Sigmoid colon (tissue), 7 donors: ENCODE measurements at regions of chr6 and their contacts with region 1.

Region 1: GRCh38 chr6:38012573-38012972 is 193.0 kb downstream of the ZFAND3 start:
- DNase-seq: no peak
- H3K4me3 ChIP-seq: no peak overlapping the region
- H3K27ac ChIP-seq: no peak overlapping the region
- H3K4me1 ChIP-seq: peaks cover 0 to 42% (median 27%) of the 10 kb centered on the region in 4 donors
- H3K27me3 ChIP-seq: no peaks in the 10 kb centered on the region
- CTCF ChIP-seq: peak in 3 of 4 experiments; percentile 34 to 52 (median 43)
- EP300 ChIP-seq: no peak
- POLR2A ChIP-seq: no peak

Region 2: GRCh38 chr6:37783856-37784584 is 228.6 kb before region 1 on chr6:
- intact Hi-C with region 1: loop called (anchors 10 kb)
- DNase-seq: peak; percentile 73
- H3K4me3 ChIP-seq: peak overlapping the region; percentile 24 to 53 (median 48)
- H3K27ac ChIP-seq: peak overlapping the region; percentile 9 to 60 (median 34)
- H3K4me1 ChIP-seq: peaks cover 0 to 18% (median 15%) of the 10 kb centered on the region in 4 donors
- H3K27me3 ChIP-seq: no peaks in the 10 kb centered on the region
- CTCF ChIP-seq: no peak
- EP300 ChIP-seq: no peak
- POLR2A ChIP-seq: no peak

Region 3: GRCh38 chr6:37940074-37940847 is 72.3 kb before region 1 on chr6:
- intact Hi-C with region 1: no loop called
- DNase-seq: peak; percentile 67
- H3K4me3 ChIP-seq: no peak overlapping the region
- H3K27ac ChIP-seq: no peak overlapping the region
- H3K4me1 ChIP-seq: peaks cover 0 to 76% (median 32%) of the 10 kb centered on the region in 4 donors
- H3K27me3 ChIP-seq: no peaks in the 10 kb centered on the region
- CTCF ChIP-seq: no peak
- EP300 ChIP-seq: no peak
- POLR2A ChIP-seq: no peak

Region 4: DNA sequence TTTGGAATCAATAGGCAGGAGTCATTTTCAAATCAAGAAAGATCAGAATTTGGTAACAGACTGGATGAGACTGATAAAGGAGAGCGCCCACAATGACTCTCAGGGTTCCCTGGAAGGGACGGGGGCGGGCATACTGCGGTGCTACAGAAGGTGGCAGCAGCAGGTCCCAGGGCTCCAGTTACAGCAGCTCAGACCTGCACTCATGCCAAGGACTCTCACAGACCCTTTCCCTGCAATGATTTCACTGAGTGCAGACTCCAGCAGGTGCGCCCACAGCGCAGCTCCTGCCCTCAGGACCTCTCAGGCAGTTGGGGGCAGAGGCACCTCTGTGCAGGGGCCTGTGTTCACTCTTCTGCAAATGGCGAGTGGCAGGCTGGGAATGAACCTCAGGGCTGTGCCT is 166.7 kb after region 1 on chr6:
- intact Hi-C with region 1: no loop called
- DNase-seq: no peak
- H3K4me3 ChIP-seq: no peak overlapping the region
- H3K27ac ChIP-seq: no peak overlapping the region
- H3K4me1 ChIP-seq: no peaks in the 10 kb centered on the region
- H3K27me3 ChIP-seq: no peaks in the 10 kb centered on the region
- CTCF ChIP-seq: no peak
- EP300 ChIP-seq: no peak
- POLR2A ChIP-seq: no peak

Region 5: GRCh38 chr6:38370653-38371601 is 358.4 kb after region 1 on chr6:
- intact Hi-C with region 1: no loop called
- DNase-seq: no peak
- H3K4me3 ChIP-seq: no peak overlapping the region
- H3K27ac ChIP-seq: peak overlapping the region in 2 of 4 donors; percentile 6 to 48
- H3K4me1 ChIP-seq: peaks cover 0 to 24% (median 14%) of the 10 kb centered on the region in 4 donors
- H3K27me3 ChIP-seq: no peaks in the 10 kb centered on the region
- CTCF ChIP-seq: no peak
- EP300 ChIP-seq: no peak
- POLR2A ChIP-seq: no peak